ENCODE measurements at regions of chr11 and their contacts with region 1.

Region 1: GRCh38 chr11:19777377-19778102 is 64.9 kb downstream of the NAV2 start:
- DNase-seq: no peak
- H3K4me3 ChIP-seq: peak overlapping the region in 1 of 3 donors; percentile 50
- H3K27ac ChIP-seq: peak overlapping the region in 1 of 3 donors; percentile 22
- H3K4me1 ChIP-seq: peaks cover 8 to 37% of the 10 kb centered on the region in 2 donors
- H3K27me3 ChIP-seq: no peaks in the 10 kb centered on the region
- CTCF ChIP-seq: no peak
- POLR2A ChIP-seq: no peak

Region 2: DNA sequence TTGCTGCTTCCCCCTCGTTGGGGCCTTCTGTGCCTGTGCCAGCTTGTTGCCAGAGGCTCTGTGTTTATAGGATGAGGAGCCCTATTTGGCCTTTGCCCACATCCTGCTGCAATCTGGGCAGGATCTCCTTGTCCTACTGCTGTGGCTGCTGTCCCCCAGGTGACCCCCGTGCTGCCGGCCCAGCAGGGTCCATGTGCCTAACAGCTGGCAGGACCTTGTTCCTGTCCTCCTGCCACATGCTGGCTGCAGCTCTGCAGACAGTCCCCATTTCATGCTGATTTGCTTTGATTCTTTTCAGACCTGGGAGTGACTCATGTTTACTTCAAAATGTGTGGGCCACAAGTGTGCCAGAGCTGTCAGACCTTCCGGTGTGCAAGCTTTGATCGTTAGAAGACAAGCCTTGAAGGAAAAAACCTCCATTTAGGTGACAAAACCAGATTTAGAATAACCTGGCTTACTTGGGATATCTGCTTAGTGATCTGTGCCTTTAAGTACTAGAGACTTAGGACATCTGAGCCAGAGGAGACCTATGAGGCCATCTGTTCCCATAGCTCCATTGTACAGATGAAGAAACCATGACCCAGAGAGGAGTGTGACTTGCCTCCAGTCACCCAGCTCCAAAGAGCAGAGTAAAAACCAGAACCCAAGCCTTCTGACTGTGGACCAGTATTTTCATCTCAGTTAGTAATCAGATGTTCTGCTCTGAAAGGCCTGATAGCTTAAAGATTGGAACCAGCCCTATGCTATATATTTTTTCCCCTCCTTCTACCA is 53.8 kb before region 1 on chr11:
- intact Hi-C with region 1: no loop called
- DNase-seq: peak in 1 of 2 donors; percentile 46
- H3K4me3 ChIP-seq: no peak overlapping the region
- H3K27ac ChIP-seq: peak overlapping the region; percentile 93 to 98 (median 96)
- H3K4me1 ChIP-seq: peaks cover 42 to 55% of the 10 kb centered on the region in 2 donors
- H3K27me3 ChIP-seq: no peaks in the 10 kb centered on the region
- CTCF ChIP-seq: no peak
- POLR2A ChIP-seq: no peak

Region 3: DNA sequence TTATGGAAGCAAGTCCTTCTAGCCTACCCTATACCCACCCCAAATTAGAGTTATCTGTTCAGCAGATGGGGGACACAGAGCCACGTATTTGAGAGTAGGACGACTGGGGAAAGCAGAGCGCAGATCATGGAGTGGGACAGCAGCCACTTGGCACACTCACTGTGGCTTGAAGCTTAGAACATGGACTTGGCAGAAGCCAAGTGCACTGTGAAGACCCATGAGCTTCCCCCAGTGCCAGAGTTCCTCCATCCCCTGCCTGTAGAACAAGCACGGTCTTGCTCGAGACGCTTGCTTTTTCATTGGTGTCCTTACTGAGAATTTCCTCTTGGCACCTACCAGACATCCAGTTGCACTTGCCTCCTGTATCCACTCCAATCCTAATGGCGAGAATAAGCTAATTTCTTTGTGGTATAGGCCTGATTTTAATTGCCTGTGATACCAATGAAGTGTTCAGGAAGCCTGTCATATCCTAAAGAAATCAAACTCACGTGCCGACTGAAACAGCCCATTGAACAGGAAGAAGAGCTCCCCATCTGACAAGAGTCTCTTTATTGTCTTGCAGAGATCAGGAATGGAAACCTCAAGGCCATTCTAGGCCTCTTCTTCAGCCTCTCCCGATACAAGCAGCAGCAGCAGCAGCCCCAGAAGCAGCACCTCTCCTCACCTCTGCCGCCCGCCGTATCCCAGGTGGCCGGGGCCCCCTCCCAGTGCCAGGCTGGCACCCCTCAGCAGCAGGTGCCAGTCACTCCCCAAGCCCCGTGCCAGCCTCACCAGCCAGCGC is 102.0 kb after region 1 on chr11:
- intact Hi-C with region 1: loop called (anchors 10 kb)
- DNase-seq: no peak
- H3K4me3 ChIP-seq: no peak overlapping the region
- H3K27ac ChIP-seq: no peak overlapping the region
- H3K4me1 ChIP-seq: peaks cover 0 to 12% of the 10 kb centered on the region in 2 donors
- H3K27me3 ChIP-seq: no peaks in the 10 kb centered on the region
- CTCF ChIP-seq: no peak
- POLR2A ChIP-seq: no peak

Region 4: DNA sequence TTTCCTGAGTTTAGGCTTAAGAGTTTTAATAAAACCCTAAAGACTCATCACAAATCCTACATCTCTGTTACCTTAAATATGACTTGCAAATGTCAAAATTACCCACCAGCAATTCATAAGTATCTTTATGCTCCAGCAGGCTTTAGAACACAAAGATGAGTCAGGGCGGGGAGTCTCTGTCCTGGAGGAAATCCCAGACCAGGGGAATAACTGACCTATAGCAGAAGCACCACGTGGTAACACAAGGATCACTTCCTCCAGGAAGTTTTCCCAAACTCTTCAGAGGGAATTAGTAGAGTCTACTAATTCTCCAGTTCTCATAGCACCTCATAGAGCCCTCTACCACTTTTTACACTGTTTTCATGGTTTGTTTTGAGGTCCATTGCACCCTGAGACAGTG is 152.1 kb after region 1 on chr11:
- intact Hi-C with region 1: no loop called
- DNase-seq: no peak
- H3K4me3 ChIP-seq: no peak overlapping the region
- H3K27ac ChIP-seq: peak overlapping the region in 2 of 3 donors; percentile 35 to 96
- H3K4me1 ChIP-seq: peaks cover 42 to 78% of the 10 kb centered on the region in 2 donors
- H3K27me3 ChIP-seq: no peaks in the 10 kb centered on the region
- CTCF ChIP-seq: no peak
- POLR2A ChIP-seq: no peak